Sigmoid colon (tissue), 7 donors: ENCODE measurements at regions of chr13 and their contacts with region 1.

Region 1: DNA sequence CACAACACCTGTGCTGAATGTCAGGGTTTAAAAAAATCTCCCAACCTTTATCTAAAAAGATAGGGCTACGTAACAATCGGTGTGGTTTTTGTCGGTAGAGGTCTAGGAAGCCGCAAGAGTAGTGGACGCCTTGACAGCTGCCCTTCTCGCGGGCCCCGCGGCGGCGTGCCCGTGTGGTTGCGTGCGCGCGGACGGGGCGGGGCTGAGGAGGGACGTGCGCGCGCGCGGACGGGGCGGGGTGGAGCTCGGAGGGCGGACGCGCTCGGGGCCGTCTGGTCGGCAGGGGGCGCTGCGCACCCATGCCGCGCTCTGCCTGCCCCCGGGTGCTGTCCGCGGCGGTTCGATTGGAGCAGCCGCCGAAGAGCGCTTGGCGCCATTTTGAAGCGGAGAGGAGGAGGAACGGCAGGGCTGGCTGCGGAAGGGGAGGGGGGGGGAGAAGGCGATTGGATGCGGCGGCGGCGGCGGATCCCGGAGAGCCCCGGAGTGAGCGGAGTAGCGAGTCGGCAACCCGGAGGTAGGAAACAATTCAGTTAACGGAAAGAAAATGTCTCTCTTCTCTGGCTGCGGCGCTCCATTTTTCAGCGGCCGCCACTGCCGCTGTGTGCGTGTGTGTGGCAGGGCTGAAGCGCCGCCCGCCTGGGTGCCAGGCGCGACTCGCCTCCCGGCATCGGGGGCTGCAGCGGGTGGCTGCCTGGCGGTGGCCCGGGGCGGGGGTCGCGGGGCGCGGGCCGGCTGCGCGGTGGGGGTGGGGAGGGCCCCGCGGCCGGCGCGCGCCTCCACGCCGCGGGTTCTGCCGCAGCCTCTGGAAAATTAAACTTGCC is at the start of gene PDS5B:
- DNase-seq: peak; percentile 98
- H3K4me3 ChIP-seq: peak within 1 kb of the TSS; percentile 72 to 87 (median 84)
- H3K27ac ChIP-seq: peak within 1 kb of the TSS; percentile 90 to 99 (median 93)
- H3K4me1 ChIP-seq: peaks cover 0 to 39% (median 29%) of the 10 kb centered on the region in 4 donors
- H3K27me3 ChIP-seq: no peaks in the 10 kb centered on the region
- CTCF ChIP-seq: peak; percentile 42 to 88 (median 51)
- EP300 ChIP-seq: no peak
- POLR2A ChIP-seq: peak; percentile 16 to 45
- total RNA-seq, gene PDS5B: 52.8 to 65.0 (median 59.9) TPM

Region 2: DNA sequence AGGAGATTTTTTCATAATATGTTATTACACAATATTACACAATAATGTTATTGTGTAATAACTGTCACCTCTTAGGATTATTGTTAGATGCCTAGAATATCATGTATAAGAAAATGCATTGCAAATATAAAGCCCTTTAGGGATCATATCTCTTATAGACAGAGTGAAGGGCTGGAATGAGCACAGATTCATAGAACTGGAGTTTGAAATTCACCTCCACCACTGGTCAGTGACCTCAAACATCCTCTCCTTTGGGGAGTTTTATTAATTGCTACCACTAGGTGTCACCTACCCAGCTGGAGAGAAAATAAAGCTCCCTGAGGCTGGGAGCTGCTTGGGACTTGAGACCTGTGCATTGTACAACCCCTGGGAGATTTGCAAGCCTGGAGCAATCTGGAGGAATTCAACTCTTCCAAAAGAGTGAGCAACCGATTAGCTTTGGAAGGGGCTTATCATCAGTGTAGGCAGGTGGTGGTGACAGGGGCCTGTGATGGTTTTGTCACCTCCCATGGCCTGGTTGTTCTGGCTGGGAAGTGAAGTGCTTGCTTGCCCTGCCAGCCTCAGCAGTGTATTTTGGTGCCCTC is 585.0 kb before region 1 on chr13:
- intact Hi-C with region 1: no loop called
- DNase-seq: no peak
- H3K4me3 ChIP-seq: no peak overlapping the region
- H3K27ac ChIP-seq: no peak overlapping the region
- H3K4me1 ChIP-seq: peaks cover 0 to 8% (median 2%) of the 10 kb centered on the region in 4 donors
- H3K27me3 ChIP-seq: no peaks in the 10 kb centered on the region
- CTCF ChIP-seq: peak; percentile 18 to 53 (median 40)
- EP300 ChIP-seq: no peak
- POLR2A ChIP-seq: no peak

Region 3: DNA sequence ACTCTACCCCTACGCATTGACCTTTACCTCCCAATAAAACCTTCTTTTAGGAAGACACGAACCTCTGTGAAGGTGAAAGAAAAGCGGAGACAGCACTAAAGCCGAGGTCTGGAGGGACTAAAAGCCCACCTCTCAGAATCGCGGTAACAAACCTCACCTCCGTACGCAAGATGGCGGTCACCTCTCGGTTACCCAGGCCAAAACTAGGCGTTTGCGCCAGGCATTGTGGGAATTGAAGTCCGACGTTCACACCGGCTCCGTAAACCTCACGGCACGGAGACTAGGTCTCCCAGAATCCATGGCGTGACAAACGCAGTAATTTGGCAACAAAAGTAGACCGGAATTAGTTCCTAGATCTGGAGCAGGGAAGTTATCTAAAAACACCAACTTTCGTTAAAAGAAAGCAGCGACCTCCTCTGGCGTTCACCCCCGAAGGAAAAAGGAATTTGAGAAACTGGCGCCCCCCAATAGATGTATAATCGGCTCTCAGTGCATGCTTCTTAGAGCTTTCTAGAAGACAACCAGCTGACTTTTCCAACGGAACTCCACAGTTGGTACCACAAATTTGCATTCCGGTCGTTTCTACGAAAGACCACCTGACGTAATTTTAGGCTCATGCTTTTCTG is 47.6 kb before region 1 on chr13 and contains the start of gene N4BP2L2:
- intact Hi-C with region 1: loop called (anchors 5 kb)
- DNase-seq: peak; percentile 98
- H3K4me3 ChIP-seq: peak within 1 kb of the TSS; percentile 68 to 83 (median 76)
- H3K27ac ChIP-seq: peak within 1 kb of the TSS; percentile 90 to 94 (median 92)
- H3K4me1 ChIP-seq: peaks cover 0 to 40% (median 39%) of the 10 kb centered on the region in 4 donors
- H3K27me3 ChIP-seq: no peaks in the 10 kb centered on the region
- CTCF ChIP-seq: no peak
- EP300 ChIP-seq: peak in 1 of 4 donors; percentile 3
- POLR2A ChIP-seq: peak; percentile 3 to 26
- total RNA-seq, gene N4BP2L2: 160 to 232 (median 222) TPM

Region 4: DNA sequence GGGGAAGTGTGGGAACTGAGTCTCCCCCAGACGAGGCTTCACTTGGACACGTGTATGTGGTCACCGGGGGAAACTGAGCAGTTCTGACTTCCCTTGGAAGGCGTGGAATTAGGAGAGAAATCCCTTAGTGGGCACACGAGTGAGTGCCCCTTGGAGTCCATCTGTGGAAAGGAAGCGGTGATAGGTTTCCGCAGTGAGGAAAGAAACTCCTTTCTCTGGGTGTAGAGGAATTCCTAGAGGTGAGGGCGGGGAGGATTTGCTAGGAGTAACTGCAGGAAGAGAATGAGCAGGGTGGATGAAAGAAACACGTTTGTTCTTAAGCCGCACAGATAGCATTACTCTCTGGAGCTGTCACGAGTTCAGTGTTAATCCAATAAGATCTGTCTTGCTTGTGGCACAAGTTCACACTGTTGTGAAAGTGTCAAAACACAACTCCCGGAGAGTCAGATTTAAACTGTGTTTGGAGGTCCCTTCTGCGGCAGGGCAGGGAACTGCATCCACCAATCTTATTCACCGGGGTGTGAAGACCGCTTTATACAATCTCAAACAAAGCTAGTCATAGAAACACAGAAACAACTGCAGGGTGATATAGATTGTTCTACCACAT is 431.1 kb after region 1 on chr13:
- intact Hi-C with region 1: loop called (anchors 5 kb)
- DNase-seq: peak; percentile 84
- H3K4me3 ChIP-seq: peak overlapping the region; percentile 47 to 74 (median 62)
- H3K27ac ChIP-seq: peak overlapping the region; percentile 75 to 79 (median 77)
- H3K4me1 ChIP-seq: peaks cover 0 to 21% (median 12%) of the 10 kb centered on the region in 4 donors
- H3K27me3 ChIP-seq: no peaks in the 10 kb centered on the region
- CTCF ChIP-seq: peak; percentile 22 to 60 (median 51)
- EP300 ChIP-seq: no peak
- POLR2A ChIP-seq: no peak

Region 5: GRCh38 chr13:33204130-33204927 is 618.0 kb after region 1 on chr13:
- intact Hi-C with region 1: loop called (anchors 5 kb)
- DNase-seq: peak; percentile 96
- H3K4me3 ChIP-seq: peak overlapping the region; percentile 36 to 58 (median 51)
- H3K27ac ChIP-seq: peak overlapping the region; percentile 83 to 88 (median 84)
- H3K4me1 ChIP-seq: peaks cover 0 to 82% (median 73%) of the 10 kb centered on the region in 4 donors
- H3K27me3 ChIP-seq: no peaks in the 10 kb centered on the region
- CTCF ChIP-seq: no peak
- EP300 ChIP-seq: peak in 3 of 4 donors; percentile 2 to 53 (median 44)
- POLR2A ChIP-seq: no peak

Region 6: DNA sequence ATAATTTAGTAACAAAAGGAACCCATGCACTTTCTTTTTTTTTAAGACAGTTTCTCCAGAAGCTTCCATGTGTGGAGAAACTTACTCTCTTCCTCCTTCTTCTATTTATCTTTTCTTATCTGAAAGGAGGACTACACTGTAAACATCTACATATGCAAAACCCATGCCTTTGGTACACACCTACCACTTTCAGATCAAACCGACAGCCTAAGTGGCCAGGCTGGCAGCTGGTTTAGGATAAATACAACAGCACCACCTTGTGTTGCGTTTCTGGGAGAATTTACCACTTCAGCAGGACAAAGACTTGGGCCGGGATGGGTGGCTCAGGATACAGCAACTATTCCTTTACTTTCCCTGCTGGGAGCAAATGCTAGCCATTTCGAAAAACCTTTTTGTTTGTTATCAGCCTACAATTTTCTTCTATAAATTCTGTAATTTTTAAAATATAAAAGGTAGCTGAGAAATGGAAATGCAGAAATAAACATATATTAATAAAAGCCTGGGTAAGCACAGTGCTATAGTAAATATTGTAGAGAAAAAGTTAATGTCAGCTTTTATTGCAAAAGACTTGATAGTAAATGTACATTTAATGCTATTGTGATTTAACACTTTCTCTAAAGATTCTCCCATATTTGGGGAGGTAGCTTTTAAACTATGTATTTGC is 1137.6 kb after region 1 on chr13:
- intact Hi-C with region 1: loop called (anchors 1 kb)
- DNase-seq: peak; percentile 90
- H3K4me3 ChIP-seq: no peak overlapping the region
- H3K27ac ChIP-seq: peak overlapping the region; percentile 61 to 72 (median 70)
- H3K4me1 ChIP-seq: peaks cover 0 to 37% (median 28%) of the 10 kb centered on the region in 4 donors
- H3K27me3 ChIP-seq: no peaks in the 10 kb centered on the region
- CTCF ChIP-seq: peak; percentile 55 to 81 (median 68)
- EP300 ChIP-seq: no peak
- POLR2A ChIP-seq: no peak